ENCODE measurements at regions of chr3 and their contacts with region 1.

Region 1: DNA sequence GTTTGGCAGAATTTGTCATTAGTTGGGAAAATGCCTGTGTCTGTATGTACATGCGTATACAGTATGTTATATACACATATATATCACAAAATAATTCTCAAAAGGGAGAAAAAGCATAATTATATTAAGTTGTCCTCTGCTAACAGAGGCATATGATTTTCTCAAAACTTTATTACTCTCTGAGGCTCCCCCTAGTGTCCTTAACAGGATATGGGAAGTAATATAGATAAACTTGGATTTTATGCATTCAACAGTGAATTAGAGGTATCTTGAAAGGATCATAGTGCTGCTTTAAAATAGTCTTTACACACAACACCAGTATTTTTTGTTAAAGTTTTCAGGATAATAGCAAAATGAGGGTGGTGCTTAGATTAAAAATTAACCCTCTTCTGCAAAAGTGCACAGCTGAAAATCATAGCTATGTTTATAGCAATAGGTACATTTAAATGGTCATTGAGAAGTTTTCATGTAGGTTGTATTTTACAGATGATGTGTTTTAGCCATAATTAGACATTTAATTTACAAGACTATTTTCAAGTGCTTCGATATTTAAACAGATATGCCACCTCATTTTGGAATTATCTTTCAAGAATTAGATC is 454.0 kb upstream of the ROBO2 start:
- DNase-seq: no peak
- H3K4me3 ChIP-seq: no peak overlapping the region
- H3K27ac ChIP-seq: no peak overlapping the region
- H3K27me3 ChIP-seq: no peaks in the 10 kb centered on the region
- CTCF ChIP-seq: peak; percentile 78

Region 2: GRCh38 chr3:76311941-76312340 is 274.0 kb before region 1 on chr3:
- CTCF ChIA-PET with region 1: interaction called, 14 read pairs
- POLR2A ChIA-PET with region 1: no interaction called
- DNase-seq: no peak
- H3K4me3 ChIP-seq: peak overlapping the region; percentile 67
- H3K27ac ChIP-seq: no peak overlapping the region
- H3K27me3 ChIP-seq: no peaks in the 10 kb centered on the region
- CTCF ChIP-seq: no peak

Region 3: GRCh38 chr3:76570436-76571057 is 15.3 kb before region 1 on chr3:
- CTCF ChIA-PET with region 1: interaction called, 44 read pairs
- POLR2A ChIA-PET with region 1: no interaction called
- DNase-seq: no peak
- H3K4me3 ChIP-seq: no peak overlapping the region
- H3K27ac ChIP-seq: no peak overlapping the region
- H3K27me3 ChIP-seq: no peaks in the 10 kb centered on the region
- CTCF ChIP-seq: peak; percentile 78

Measured in AG04450 (cell line).